ENCODE measurements at regions of chr5 and their contacts with region 1.

Region 1: GRCh38 chr5:171207256-171207847 is 101.7 kb upstream of the TLX3 start:
- DNase-seq: no peak
- H3K4me3 ChIP-seq: no peak overlapping the region
- H3K27ac ChIP-seq: no peak overlapping the region
- H3K4me1 ChIP-seq: no peaks in the 10 kb centered on the region
- H3K27me3 ChIP-seq: no peaks in the 10 kb centered on the region
- CTCF ChIP-seq: peak; percentile 16 to 69 (median 52)
- POLR2A ChIP-seq: no peak

Region 2: DNA sequence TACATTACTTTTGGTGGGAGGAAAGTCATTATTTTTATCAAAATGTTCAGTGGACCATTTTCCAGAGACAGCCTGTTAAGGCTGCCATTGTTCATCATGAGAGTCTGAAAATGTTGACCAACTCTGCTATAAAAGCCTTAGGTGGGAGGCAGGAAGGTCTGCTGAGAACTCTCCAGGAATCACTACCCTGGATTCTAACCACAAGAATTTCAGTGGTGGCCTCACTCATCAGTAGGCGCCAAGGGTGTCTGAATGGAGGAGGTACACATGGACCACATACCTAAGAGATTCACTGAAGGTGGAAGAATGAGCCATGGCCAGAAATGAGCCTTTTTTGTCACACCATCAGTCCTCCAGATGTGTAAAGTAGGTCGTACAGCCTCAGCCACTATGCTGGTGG is 80.7 kb after region 1 on chr5:
- intact Hi-C with region 1: no loop called
- DNase-seq: no peak
- H3K4me3 ChIP-seq: no peak overlapping the region
- H3K27ac ChIP-seq: no peak overlapping the region
- H3K4me1 ChIP-seq: no peaks in the 10 kb centered on the region
- H3K27me3 ChIP-seq: no peaks in the 10 kb centered on the region
- CTCF ChIP-seq: no peak
- POLR2A ChIP-seq: no peak

Region 3: GRCh38 chr5:171342362-171343111 is 135.2 kb after region 1 on chr5:
- intact Hi-C with region 1: loop called (anchors 5 kb)
- DNase-seq: peak; percentile 15
- H3K4me3 ChIP-seq: no peak overlapping the region
- H3K27ac ChIP-seq: no peak overlapping the region
- H3K4me1 ChIP-seq: no peaks in the 10 kb centered on the region
- H3K27me3 ChIP-seq: peaks cover 0 to 60% (median 5%) of the 10 kb centered on the region in 7 donors
- CTCF ChIP-seq: peak in 9 of 11 experiments; percentile 8 to 50 (median 42)
- POLR2A ChIP-seq: no peak